ENCODE measurements at regions of chr10 and their contacts with region 1.

Region 1: GRCh38 chr10:95246579-95247051 is 44.2 kb downstream of the PDLIM1 start:
- DNase-seq: peak; percentile 60 to 87
- ATAC-seq: peak; percentile 30 to 71 (median 56)
- H3K4me3 ChIP-seq: no peak overlapping the region
- H3K27ac ChIP-seq: peak overlapping the region in 9 of 10 donors; percentile 34 to 79 (median 57)
- H3K4me1 ChIP-seq: peaks cover 10 to 63% (median 48%) of the 10 kb centered on the region in 9 donors
- H3K27me3 ChIP-seq: no peaks in the 10 kb centered on the region
- CTCF ChIP-seq: peak; percentile 78 to 92 (median 88)

Region 2: DNA sequence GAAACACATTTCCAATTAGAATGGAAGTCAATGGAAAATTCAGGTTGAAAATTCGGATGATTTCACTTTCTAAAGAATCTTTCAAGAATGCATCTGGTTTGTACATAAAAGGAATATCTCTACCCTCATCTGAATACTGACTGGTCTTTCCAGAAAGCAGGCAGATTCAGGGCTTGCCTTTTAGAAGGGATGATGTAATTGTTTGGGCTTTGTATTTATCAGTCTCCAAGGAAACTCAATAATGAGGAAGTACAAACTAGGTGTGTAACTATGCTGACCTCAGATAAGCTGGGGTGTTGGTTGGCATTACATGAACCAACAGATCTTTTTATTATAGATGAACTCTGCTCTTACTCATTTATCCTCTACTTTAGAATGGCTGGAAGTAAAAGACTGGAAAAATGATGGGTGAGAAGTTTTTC is 20.1 kb after region 1 on chr10:
- intact Hi-C with region 1: no loop called
- DNase-seq: no peak
- ATAC-seq: peak; percentile 57 to 87 (median 78)
- H3K4me3 ChIP-seq: no peak overlapping the region
- H3K27ac ChIP-seq: peak overlapping the region; percentile 53 to 90 (median 80)
- H3K4me1 ChIP-seq: peaks cover 20 to 77% (median 63%) of the 10 kb centered on the region in 9 donors
- H3K27me3 ChIP-seq: no peaks in the 10 kb centered on the region
- CTCF ChIP-seq: no peak

Region 3: DNA sequence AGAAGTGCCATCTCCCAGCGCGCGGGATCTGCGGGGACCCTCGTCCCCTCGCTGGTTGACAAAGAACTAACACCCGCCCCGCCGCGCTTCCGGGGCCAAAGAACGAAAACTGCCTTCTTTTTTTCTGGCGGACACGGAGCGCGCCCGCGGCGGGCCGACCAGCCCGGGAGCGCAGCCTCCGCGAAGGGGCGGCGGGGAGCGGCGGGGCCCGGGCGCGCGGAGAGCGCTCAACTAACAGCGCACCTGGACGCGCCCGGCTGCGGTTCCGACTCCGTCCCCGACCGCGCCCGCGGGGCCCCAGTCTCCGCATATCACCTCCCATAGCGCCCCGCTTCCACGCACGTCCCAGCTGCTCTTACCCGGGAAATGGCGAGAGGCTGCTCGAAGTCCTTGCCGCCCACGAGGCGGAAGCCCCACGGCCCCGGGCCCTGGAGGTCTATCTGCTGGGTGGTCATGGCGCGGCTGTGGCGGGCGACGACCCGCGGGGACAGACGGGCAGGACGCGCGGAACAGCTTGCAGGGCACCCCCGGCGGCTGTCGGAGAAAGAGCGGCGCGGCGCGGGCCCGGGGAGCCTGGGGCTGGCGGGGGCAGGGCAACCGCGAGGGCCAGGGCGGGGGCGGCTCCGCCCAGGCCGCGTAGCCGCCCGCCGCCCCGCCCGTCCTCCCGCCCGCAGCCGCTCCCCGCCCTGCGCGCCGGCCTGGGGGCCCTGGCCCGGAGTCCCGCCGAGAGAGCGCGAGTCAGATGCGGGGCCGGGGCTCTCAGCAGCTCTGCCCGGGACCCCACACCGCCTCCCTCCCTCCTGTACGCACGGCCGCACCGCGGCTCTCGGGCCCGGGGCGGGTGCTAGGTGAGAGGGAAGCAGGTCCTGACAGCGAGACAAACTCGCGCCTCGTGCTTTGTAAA is 44.1 kb after region 1 on chr10 and contains the start of gene PDLIM1:
- intact Hi-C with region 1: loop called in 6 of 10 experiments (anchors 2 to 5 kb)
- DNase-seq: peak; percentile 75 to 84
- ATAC-seq: peak; percentile 65 to 92 (median 83)
- H3K4me3 ChIP-seq: peak within 1 kb of the TSS; percentile 76 to 98 (median 94)
- H3K27ac ChIP-seq: peak within 1 kb of the TSS; percentile 91 to 98 (median 96)
- H3K4me1 ChIP-seq: peaks cover 4 to 63% (median 55%) of the 10 kb centered on the region in 9 donors
- H3K27me3 ChIP-seq: peaks cover 0 to 24% (median 0%) of the 10 kb centered on the region in 7 donors
- CTCF ChIP-seq: peak in 8 of 9 donors; percentile 12 to 56 (median 36)
- total RNA-seq, gene PDLIM1: 201 to 467 (median 347) TPM

Region 4: DNA sequence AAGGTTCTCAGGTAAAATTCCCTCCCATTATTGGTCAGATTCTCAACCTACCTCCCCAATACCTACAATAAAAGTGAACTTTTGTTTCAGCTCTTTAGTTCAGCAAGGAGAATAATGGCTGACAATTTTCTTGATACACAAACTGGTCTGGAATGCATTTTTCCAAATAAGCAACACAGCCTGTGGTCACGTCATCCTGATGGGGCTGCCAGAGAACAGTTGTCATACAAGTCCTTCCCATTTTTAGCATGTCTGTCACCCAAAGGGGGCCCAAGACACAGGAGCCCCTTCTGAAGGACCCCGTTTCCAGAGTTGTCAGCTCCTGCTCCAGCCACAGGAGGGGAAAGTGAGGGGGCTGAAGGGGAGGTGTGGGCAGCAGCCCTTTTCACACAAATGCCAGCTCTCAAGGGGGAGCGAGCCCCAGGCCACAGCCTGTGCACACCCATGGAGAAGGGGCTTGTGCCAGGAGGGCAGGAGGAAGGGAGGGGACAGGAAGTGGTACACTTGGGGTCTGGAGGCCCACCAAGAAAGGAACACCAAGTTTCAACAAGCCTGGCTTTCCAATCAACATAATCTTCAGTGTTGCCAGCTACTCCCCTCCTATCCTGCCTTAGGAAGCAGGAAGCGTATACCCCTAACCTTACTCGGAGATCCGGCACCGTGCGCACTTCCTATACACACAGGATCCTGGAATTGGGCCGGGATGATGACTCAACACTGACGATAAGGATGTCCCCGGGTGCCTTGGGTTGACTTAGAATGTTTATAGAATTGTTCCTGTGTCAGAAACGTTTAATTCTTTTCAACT is 87.6 kb after region 1 on chr10:
- intact Hi-C with region 1: no loop called
- DNase-seq: peak; percentile 71 to 93
- ATAC-seq: peak; percentile 85 to 95 (median 92)
- H3K4me3 ChIP-seq: peak overlapping the region in 1 of 10 donors; percentile 4
- H3K27ac ChIP-seq: peak overlapping the region; percentile 83 to 96 (median 91)
- H3K4me1 ChIP-seq: peaks cover 19 to 87% (median 56%) of the 10 kb centered on the region in 9 donors
- H3K27me3 ChIP-seq: no peaks in the 10 kb centered on the region
- CTCF ChIP-seq: no peak

Region 5: DNA sequence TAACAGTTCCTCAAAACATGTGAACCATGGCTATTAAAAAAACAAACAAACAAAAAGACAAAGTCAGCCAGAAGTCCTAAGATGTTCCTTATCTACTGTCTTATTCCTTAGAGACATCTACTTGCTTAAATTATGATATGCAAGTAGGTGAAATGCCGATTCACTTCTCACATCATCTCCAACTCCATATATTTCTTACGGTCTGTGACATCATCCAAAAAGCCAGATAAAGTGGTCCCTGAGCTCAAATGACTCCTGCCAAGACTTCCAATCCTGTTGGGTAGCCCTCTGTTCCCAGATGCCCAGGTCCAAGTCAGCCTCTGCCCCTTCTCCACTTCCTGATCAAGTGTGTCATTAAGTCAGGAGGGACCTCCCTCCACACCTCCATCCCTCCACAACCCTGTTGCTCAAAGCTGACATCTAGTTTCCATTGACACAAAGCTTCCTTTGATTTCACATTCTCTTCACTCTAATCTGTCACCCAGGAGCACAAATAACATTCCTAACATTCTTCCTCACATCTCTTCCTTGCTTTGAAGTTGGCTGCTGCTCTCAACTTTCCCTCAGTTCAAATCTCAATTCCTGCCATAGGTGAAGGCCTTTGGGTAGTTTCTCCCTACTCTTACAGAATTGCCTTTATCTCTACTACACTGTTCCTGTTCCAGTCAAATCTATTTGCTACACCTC is 100.2 kb after region 1 on chr10:
- intact Hi-C with region 1: loop called in 1 of 10 experiments (anchors 5 kb)
- DNase-seq: no peak
- ATAC-seq: peak in 2 of 8 donors; percentile 3 to 21
- H3K4me3 ChIP-seq: no peak overlapping the region
- H3K27ac ChIP-seq: peak overlapping the region in 4 of 10 donors; percentile 19 to 83 (median 34)
- H3K4me1 ChIP-seq: peaks cover 0 to 62% (median 35%) of the 10 kb centered on the region in 9 donors
- H3K27me3 ChIP-seq: no peaks in the 10 kb centered on the region
- CTCF ChIP-seq: no peak

Region 6: DNA sequence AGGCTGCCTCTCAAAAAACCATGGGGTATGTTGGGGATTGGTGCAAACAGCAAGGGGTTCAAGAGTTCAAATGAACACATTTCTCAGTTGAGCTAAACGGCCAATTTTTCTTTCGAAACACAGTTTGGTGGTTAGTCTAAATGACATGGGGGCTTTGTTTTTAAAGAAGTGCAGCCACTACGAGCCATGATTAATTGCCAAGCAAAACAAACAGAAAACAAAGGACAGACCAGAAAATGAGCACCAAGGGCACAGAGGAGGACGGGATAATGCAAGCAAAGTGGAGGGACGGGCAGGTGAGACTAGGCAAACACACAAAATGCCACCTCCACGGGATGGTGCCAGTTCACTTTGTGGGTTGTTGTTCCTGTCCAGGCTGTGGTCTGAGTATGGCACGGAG is 108.7 kb after region 1 on chr10:
- intact Hi-C with region 1: loop called in 2 of 10 experiments (anchors 5 kb)
- DNase-seq: no peak
- ATAC-seq: no peak
- H3K4me3 ChIP-seq: no peak overlapping the region
- H3K27ac ChIP-seq: peak overlapping the region in 3 of 10 donors; percentile 2 to 29 (median 5)
- H3K4me1 ChIP-seq: peaks cover 0 to 63% (median 25%) of the 10 kb centered on the region in 9 donors
- H3K27me3 ChIP-seq: no peaks in the 10 kb centered on the region
- CTCF ChIP-seq: no peak

Region 7: GRCh38 chr10:95363303-95363912 is 116.8 kb after region 1 on chr10:
- intact Hi-C with region 1: loop called in 9 of 10 experiments (anchors 1 to 5 kb)
- DNase-seq: peak in 1 of 2 donors; percentile 60
- ATAC-seq: peak in 5 of 8 donors; percentile 25 to 60 (median 45)
- H3K4me3 ChIP-seq: no peak overlapping the region
- H3K27ac ChIP-seq: peak overlapping the region in 2 of 10 donors; percentile 8 to 75
- H3K4me1 ChIP-seq: peaks cover 0 to 52% (median 33%) of the 10 kb centered on the region in 9 donors
- H3K27me3 ChIP-seq: no peaks in the 10 kb centered on the region
- CTCF ChIP-seq: peak; percentile 79 to 98 (median 92)

Region 8: GRCh38 chr10:95374597-95375209 is 128.1 kb after region 1 on chr10:
- intact Hi-C with region 1: loop called in 1 of 10 experiments (anchors 5 kb)
- DNase-seq: peak; percentile 69 to 86
- ATAC-seq: peak; percentile 78 to 93 (median 88)
- H3K4me3 ChIP-seq: no peak overlapping the region
- H3K27ac ChIP-seq: peak overlapping the region in 5 of 10 donors; percentile 4 to 72 (median 17)
- H3K4me1 ChIP-seq: peaks cover 19 to 61% (median 31%) of the 10 kb centered on the region in 9 donors
- H3K27me3 ChIP-seq: no peaks in the 10 kb centered on the region
- CTCF ChIP-seq: peak; percentile 93 to 97 (median 95)

Region 9: GRCh38 chr10:95601116-95601719 is 354.6 kb after region 1 on chr10:
- intact Hi-C with region 1: loop called in 3 of 10 experiments (anchors 10 kb)
- DNase-seq: peak; percentile 66 to 85
- ATAC-seq: peak; percentile 80 to 93 (median 88)
- H3K4me3 ChIP-seq: no peak overlapping the region
- H3K27ac ChIP-seq: peak overlapping the region in 2 of 10 donors; percentile 15 to 22
- H3K4me1 ChIP-seq: peaks cover 0 to 27% (median 18%) of the 10 kb centered on the region in 9 donors
- H3K27me3 ChIP-seq: no peaks in the 10 kb centered on the region
- CTCF ChIP-seq: peak; percentile 87 to 99 (median 95)